ENCODE measurements at regions of chr7 and their contacts with region 1.

Region 1: DNA sequence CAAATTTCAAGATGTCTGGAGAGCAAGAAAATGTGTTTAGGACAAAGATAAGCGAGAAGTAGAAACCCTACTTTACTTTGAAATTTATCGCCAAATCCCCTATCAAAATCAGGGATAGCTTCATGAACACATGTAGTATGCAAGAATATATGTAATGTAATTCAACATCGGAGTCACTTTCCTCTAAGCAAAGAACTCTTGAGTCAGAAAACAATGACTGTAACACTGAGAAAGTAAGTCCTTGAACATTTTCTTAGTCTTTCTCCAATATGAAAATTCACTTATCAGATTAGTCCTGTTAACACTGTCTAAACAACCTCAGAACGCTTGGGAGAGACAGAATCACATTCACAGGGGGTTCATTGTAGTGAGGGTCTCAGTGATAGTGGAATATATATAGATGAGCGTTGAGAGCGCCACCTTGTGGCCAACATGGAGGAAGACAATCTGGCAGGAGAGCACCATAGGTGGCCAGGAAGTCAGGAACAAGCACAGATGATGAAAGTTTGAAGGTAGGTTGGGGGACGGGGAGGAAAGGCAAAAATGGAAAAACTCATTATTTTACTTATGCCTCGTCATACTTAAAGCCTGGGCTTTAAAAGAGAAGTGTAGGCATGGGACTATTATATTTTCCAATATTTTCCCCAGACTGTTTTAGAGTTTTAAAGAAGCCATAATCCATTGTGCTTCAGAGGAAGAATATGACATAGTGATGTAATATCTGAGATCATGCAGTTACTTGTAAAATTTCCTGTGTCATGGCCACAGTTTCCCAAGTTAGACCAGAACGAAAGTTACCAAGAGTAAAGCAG is 115.5 kb upstream of the GNAI1 start:
- DNase-seq: peak; percentile 77
- H3K4me3 Mint-ChIP-seq: no peak overlapping the region
- H3K27ac Mint-ChIP-seq: no peak overlapping the region
- H3K4me1 Mint-ChIP-seq: no peaks in the 10 kb centered on the region
- H3K27me3 Mint-ChIP-seq: no peaks in the 10 kb centered on the region

Region 2: DNA sequence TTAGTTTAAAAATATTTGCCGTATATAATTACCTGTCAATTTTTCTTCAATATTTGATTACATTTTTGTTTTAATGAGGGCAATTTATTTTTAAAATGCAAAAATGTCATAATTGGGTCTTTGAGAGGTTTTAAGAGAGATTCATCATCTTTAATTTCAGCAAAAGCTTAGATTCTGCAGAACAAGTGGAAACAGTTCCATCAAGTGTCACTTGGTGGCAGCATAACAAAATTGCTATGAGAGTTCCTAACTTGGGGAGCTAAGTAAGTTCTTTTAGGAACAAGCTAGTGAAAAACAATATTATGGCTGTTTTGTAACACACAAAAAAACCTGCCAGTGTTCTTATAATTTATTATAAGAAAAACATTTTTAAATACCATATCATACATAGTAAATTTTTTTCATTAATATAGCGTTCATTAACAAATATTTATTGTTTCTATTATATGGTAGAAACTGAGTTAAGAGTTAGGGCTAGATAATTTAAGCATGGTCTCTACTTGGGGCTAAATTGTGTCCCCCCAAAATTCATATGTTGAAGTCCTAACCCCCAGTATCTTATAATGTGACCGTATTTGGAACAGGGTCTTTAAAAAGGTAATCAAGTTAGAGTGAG is 720.9 kb before region 1 on chr7:
- intact Hi-C with region 1: loop called (anchors 10 kb)
- DNase-seq: no peak
- H3K4me3 Mint-ChIP-seq: no peak overlapping the region
- H3K27ac Mint-ChIP-seq: no peak overlapping the region
- H3K4me1 Mint-ChIP-seq: no peaks in the 10 kb centered on the region
- H3K27me3 Mint-ChIP-seq: no peaks in the 10 kb centered on the region

Region 3: DNA sequence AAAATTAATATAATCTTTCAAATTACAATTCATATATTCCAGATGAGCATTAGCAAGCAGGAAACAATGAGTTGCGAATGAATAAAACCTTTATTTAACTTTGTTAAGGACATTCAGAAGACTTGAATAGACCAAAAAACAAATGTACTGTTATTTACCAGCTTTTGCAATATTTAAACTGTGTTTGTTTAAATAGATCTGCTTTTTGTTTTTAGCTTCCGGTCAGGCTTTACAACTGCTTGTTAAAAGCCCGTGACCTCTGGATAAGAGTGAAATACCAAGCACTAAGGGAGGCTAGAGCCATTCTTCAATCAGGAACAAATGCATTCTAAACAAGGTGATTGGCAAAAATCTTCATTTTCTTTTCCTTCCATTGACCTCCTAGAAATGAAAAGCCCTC is 69.4 kb before region 1 on chr7:
- intact Hi-C with region 1: no loop called
- DNase-seq: no peak
- H3K4me3 Mint-ChIP-seq: no peak overlapping the region
- H3K27ac Mint-ChIP-seq: no peak overlapping the region
- H3K4me1 Mint-ChIP-seq: no peaks in the 10 kb centered on the region
- H3K27me3 Mint-ChIP-seq: no peaks in the 10 kb centered on the region

Measured in activated CD4-positive, alpha-beta T cell treated with anti-CD3 and anti-CD28 coated beads, Interleukin-2, amount 10 ng/mL, durations not matched to agents 24 days and 14 days (primary cell).